Activated CD8-positive, alpha-beta T cell treated with anti-CD3 and anti-CD28 coated beads, Interleukin-2, amount 10 ng/mL, durations not matched to agents 7 days and 5 days (primary cell): ENCODE measurements at regions of chr7 and their contacts with region 1.

Region 1: GRCh38 chr7:143733876-143734275 is 23.6 kb downstream of the CTAGE6 start:
- DNase-seq: no peak
- ATAC-seq: no peak
- H3K4me3 Mint-ChIP-seq: no peak overlapping the region
- H3K27ac Mint-ChIP-seq: no peak overlapping the region
- H3K4me1 Mint-ChIP-seq: peaks cover 9% of the 10 kb centered on the region
- H3K27me3 Mint-ChIP-seq: no peaks in the 10 kb centered on the region

Region 2: DNA sequence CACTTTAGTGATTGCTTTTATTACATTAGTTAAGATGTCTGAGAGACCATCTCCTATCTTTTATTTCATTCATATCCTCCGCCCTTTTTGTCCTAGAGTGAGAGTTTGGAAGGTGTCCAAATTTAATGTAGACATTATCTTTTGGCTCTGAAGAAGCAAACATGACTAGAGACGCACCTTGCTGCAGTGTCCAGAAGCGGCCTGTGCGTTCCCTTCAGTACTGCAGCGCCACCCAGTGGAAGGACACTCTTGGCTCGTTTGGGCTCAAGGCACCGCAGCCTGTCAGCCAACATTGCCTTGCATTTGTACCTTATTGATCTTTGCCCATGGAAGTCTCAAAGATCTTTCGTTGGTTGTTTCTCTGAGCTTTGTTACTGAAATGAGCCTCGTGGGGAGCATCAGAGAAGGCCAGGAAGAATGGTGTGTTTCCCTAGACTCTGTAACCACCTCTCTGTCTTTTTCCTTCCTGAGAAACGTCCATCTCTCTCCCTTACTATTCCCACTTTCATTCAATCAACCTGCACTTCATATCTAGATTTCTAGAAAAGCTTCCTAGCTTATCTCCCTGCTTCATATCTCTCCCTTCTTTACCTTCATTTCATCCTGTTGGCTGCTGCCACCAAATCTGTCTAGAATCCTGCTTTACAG is 428.3 kb before region 1 on chr7:
- CTCF ChIA-PET with region 1: no interaction called
- POLR2A ChIA-PET with region 1: no interaction called
- DNase-seq: peak; percentile 72
- ATAC-seq: peak; percentile 57
- H3K4me3 Mint-ChIP-seq: no peak overlapping the region
- H3K27ac Mint-ChIP-seq: peak overlapping the region; percentile 9
- H3K4me1 Mint-ChIP-seq: peaks cover 51% of the 10 kb centered on the region
- H3K27me3 Mint-ChIP-seq: no peaks in the 10 kb centered on the region

Region 3: GRCh38 chr7:143850682-143851081 is 116.8 kb after region 1 on chr7:
- CTCF ChIA-PET with region 1: no interaction called
- POLR2A ChIA-PET with region 1: no interaction called
- DNase-seq: no peak
- ATAC-seq: no peak
- H3K4me3 Mint-ChIP-seq: no peak overlapping the region
- H3K27ac Mint-ChIP-seq: no peak overlapping the region
- H3K4me1 Mint-ChIP-seq: no peaks in the 10 kb centered on the region
- H3K27me3 Mint-ChIP-seq: no peaks in the 10 kb centered on the region

Region 4: DNA sequence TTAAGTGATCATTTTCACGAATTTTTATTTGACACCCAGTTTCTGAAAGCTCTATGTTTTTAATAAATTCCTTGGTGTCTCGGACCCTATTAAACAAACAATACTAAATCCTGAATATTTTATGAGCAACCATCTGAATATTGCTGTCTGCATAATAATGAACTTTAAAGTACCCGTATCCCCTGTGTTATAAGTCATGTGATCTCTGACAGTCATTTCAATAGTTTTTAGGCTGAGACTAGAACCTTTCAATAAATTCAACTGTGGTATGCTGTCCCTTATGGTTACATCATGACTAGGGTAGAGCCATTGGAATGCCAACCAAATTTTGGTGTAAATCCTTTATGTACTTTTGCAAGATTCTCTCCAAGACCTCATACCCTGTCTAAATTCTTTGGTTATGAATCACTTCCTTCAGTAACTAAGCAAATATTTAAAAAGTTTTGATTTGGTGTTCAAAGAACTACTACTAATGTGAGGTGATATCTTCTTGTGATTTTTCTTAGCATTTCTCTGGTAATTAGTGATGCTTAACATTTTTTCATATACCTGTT is 245.4 kb after region 1 on chr7:
- CTCF ChIA-PET with region 1: no interaction called
- POLR2A ChIA-PET with region 1: no interaction called
- DNase-seq: no peak
- ATAC-seq: no peak
- H3K4me3 Mint-ChIP-seq: no peak overlapping the region
- H3K27ac Mint-ChIP-seq: no peak overlapping the region
- H3K4me1 Mint-ChIP-seq: no peaks in the 10 kb centered on the region
- H3K27me3 Mint-ChIP-seq: no peaks in the 10 kb centered on the region

Region 5: DNA sequence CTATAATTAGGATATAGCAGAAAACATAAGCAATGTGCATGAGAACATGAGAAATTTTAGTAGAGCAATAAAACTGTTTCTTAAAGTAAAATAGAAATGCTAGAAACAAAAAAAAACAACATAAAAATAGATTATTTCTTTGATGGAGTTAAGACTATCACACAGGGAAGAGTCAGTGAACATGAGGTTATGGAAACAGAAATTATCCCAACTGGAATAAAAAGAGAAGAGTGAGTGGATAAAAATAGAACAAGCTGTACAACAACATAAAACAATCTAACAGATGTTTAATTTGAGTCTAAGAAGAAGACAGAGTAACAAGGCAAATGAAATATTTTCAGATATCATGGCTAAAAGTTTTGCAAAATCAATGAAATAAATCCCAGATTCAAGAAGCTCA is 258.8 kb after region 1 on chr7:
- CTCF ChIA-PET with region 1: no interaction called
- POLR2A ChIA-PET with region 1: no interaction called
- DNase-seq: no peak
- ATAC-seq: no peak
- H3K4me3 Mint-ChIP-seq: no peak overlapping the region
- H3K27ac Mint-ChIP-seq: no peak overlapping the region
- H3K4me1 Mint-ChIP-seq: peaks cover 3% of the 10 kb centered on the region
- H3K27me3 Mint-ChIP-seq: peaks cover 3% of the 10 kb centered on the region

Region 6: DNA sequence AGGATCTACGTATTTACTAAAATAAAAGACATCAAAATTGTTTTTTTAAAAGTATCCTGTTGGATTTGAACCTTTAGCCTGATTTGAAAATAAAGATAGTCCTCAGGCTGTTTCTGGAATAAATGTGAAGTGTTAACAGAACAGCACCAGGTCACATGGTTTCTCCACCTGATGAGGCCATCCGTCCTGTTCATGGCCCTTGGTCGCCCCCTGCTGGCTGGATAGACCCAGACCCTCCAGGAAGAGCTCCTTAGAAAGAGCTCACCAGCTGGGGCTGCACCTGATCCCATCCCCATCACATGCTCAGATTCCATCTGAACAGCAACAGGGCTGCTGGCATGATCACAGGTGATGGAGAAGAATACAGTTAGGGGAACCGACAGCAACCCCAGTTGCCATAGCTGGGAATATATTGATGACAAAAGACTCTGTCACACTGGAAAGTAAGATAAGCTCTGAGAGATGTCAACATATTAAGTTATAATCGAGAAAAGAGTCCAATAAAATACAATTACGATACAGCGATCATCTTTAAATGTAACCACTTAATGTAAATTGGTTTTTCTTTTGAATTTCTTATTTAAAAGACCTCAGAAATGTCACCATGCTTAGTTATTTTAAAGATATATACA is 393.9 kb after region 1 on chr7:
- CTCF ChIA-PET with region 1: interaction called, 24 read pairs
- POLR2A ChIA-PET with region 1: no interaction called
- DNase-seq: peak; percentile 92
- ATAC-seq: peak; percentile 99
- H3K4me3 Mint-ChIP-seq: no peak overlapping the region
- H3K27ac Mint-ChIP-seq: no peak overlapping the region
- H3K4me1 Mint-ChIP-seq: no peaks in the 10 kb centered on the region
- H3K27me3 Mint-ChIP-seq: no peaks in the 10 kb centered on the region